ENCODE measurements at regions of chr6 and their contacts with region 1.

Region 1: DNA sequence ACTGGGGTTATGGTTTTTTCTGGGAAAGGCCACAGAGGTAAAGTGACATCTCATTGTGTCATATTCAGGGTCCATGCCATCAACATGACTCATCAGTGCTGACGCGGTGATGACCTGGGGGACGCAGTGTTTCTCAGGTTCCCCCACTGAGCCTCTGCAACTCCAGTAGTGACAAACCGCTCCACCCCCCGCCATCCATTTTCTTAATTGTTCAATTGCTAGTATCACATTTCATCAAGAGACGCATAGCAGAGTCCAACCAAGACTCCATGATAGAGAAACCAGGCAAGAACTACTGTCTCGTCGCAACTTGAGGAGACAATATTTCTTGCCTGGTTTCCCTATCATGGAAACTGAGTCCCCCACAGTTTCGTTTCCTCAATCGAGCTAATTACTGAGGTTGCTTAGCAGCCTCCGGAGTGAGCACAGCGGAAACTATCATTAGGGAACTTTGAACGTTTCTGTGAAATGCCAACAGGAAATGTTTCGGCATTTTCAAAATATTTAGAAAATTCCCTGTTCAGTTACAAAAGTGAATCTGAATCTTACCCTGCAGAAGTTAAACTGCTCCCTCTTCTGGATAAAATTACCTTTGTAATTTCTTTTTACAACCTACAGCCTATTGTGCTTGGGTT is 12.2 kb upstream of the SERPINB1 start:
- DNase-seq: peak in 1 of 2 donors; percentile 87
- H3K4me3 ChIP-seq: peak overlapping the region; percentile 35 to 41
- H3K27ac ChIP-seq: peak overlapping the region; percentile 63
- H3K4me1 ChIP-seq: peaks cover 45% of the 10 kb centered on the region
- H3K27me3 ChIP-seq: no peaks in the 10 kb centered on the region
- CTCF ChIP-seq: peak in 2 of 3 experiments; percentile 26 to 38
- POLR2A ChIP-seq: no peak

Region 2: GRCh38 chr6:2900821-2901644 is 47.2 kb after region 1 on chr6:
- intact Hi-C with region 1: loop called (anchors 5 kb)
- DNase-seq: no peak
- H3K4me3 ChIP-seq: peak overlapping the region; percentile 58 to 76
- H3K27ac ChIP-seq: peak overlapping the region; percentile 87
- H3K4me1 ChIP-seq: peaks cover 41% of the 10 kb centered on the region
- H3K27me3 ChIP-seq: no peaks in the 10 kb centered on the region
- CTCF ChIP-seq: no peak
- POLR2A ChIP-seq: no peak

Region 3: GRCh38 chr6:3800850-3801591 is 947.1 kb after region 1 on chr6:
- intact Hi-C with region 1: loop called (anchors 5 kb)
- DNase-seq: no peak
- H3K4me3 ChIP-seq: no peak overlapping the region
- H3K27ac ChIP-seq: no peak overlapping the region
- H3K4me1 ChIP-seq: peaks cover 24% of the 10 kb centered on the region
- H3K27me3 ChIP-seq: no peaks in the 10 kb centered on the region
- CTCF ChIP-seq: no peak
- POLR2A ChIP-seq: no peak

Measured in vagina (tissue), 2 donors.